MCF 10A (cell line): ENCODE measurements at regions of chr12 and their contacts with region 1.

Region 1: DNA sequence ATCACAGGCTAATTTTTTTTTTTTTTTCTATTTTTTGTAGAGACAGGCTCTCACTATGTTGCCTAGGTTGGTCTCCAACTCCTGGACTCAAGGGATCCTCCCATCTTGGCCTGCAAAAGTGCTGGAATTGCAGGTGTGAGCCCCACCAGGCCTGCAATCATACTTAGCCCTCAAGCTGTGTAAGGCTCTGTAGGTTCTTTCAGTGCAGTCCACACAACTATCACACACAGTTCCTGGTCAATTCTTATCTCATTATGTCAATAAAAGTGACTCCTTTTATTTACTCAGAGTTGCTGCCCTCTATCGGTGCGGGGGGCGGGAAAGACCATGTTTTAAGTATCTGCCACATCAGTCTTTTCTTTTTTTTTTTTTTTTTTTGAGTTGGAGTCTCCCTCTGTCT is 29.0 kb downstream of the SLC2A3 start:
- DNase-seq: peak; percentile 61
- H3K4me3 Mint-ChIP-seq: no peak overlapping the region
- H3K27ac Mint-ChIP-seq: no peak overlapping the region
- H3K4me1 Mint-ChIP-seq: no peaks in the 10 kb centered on the region
- H3K27me3 Mint-ChIP-seq: no peaks in the 10 kb centered on the region
- CTCF ChIP-seq: peak; percentile 17

Region 2: GRCh38 chr12:7450665-7451064 is 456.3 kb before region 1 on chr12:
- CTCF ChIA-PET with region 1: no interaction called
- POLR2A ChIA-PET with region 1: no interaction called
- intact Hi-C with region 1: no loop called
- DNase-seq: peak; percentile 41
- H3K4me3 Mint-ChIP-seq: no peak overlapping the region
- H3K27ac Mint-ChIP-seq: no peak overlapping the region
- H3K4me1 Mint-ChIP-seq: peaks cover 7% of the 10 kb centered on the region
- H3K27me3 Mint-ChIP-seq: no peaks in the 10 kb centered on the region
- CTCF ChIP-seq: no peak

Region 3: DNA sequence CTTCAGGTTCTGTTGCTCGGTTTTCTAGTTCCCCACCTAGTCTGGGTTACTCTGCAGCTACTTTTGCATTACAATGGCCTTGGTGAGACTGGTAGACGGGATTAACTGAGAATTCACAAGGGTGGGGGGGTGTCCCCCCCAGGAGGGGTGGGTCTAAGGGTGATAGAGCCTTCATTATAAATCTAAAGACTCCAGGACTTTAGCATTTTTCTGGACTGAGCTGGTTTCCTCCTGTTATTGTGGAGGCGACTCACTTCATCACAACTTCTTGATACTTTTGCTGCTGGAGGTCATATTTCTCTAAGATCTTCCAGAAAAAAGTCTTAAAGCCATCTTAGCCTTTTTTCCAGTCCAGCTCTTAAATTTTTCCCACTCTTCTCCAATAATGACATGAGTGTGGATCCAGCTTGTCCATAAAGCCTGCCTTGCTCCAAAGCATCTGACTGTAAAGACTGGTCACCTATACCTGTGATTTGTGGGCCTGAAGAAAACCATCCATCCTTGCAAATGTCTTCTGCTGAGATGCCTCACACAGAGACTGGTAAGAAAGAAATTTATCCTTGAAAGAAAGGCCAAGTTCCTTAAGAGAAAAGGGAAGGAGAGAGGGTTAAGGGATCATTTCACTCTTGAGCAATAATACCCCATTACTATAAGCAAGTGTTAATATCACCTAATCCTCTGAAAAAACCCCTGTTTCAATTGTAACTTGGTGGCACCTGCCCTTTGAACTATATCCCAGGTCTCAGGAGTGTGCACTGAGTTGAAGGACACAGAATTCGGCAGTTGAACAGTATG is 14.6 kb before region 1 on chr12:
- CTCF ChIA-PET with region 1: interaction called, 22 read pairs
- POLR2A ChIA-PET with region 1: interaction called, 3 read pairs
- intact Hi-C with region 1: no loop called
- DNase-seq: no peak
- H3K4me3 Mint-ChIP-seq: peak overlapping the region; percentile 22
- H3K27ac Mint-ChIP-seq: no peak overlapping the region
- H3K4me1 Mint-ChIP-seq: peaks cover 13% of the 10 kb centered on the region
- H3K27me3 Mint-ChIP-seq: no peaks in the 10 kb centered on the region
- CTCF ChIP-seq: no peak